Mammary epithelial cell (primary cell): ENCODE measurements at regions of chr12 and their contacts with region 1.

Region 1: GRCh38 chr12:32659908-32660440 is 19.1 kb upstream of the DNM1L start:
- DNase-seq: no peak
- H3K4me3 ChIP-seq: no peak overlapping the region
- H3K27ac ChIP-seq: no peak overlapping the region
- H3K4me1 ChIP-seq: no peaks in the 10 kb centered on the region
- H3K27me3 ChIP-seq: no peaks in the 10 kb centered on the region
- CTCF ChIP-seq: no peak

Region 2: DNA sequence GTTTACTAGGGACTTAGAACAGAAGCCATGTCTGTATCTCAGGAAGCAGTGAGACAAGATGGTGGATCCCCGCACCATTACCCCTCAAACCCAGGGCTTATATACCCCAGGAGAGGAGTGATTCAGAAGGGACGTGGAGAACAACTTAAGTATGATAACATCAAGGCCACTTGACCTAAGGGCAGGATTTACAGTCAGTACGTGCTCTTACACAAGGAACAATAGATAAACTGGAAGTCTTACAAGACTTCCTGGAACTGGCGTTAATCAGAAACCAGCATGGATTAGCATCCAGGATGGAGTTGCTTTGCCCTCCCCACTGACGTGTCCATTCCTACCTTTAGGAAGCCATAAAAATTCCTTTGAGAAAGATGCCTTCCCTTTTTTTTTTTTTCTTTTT is 1009.0 kb before region 1 on chr12:
- CTCF ChIA-PET with region 1: no interaction called
- dilution Hi-C with region 1: no loop called
- in situ Hi-C with region 1: loop called in 1 of 2 experiments (anchors 25 kb)
- intact Hi-C with region 1: loop called (anchors 5 kb)
- DNase-seq: no peak
- H3K4me3 ChIP-seq: no peak overlapping the region
- H3K27ac ChIP-seq: no peak overlapping the region
- H3K4me1 ChIP-seq: peaks cover 7% of the 10 kb centered on the region
- H3K27me3 ChIP-seq: no peaks in the 10 kb centered on the region
- CTCF ChIP-seq: no peak

Region 3: GRCh38 chr12:32377344-32378055 is 282.5 kb before region 1 on chr12:
- CTCF ChIA-PET with region 1: interaction called, 3 read pairs
- dilution Hi-C with region 1: no loop called
- in situ Hi-C with region 1: loop called (anchors 10 to 25 kb)
- intact Hi-C with region 1: no loop called
- DNase-seq: no peak
- H3K4me3 ChIP-seq: no peak overlapping the region
- H3K27ac ChIP-seq: no peak overlapping the region
- H3K4me1 ChIP-seq: no peaks in the 10 kb centered on the region
- H3K27me3 ChIP-seq: no peaks in the 10 kb centered on the region
- CTCF ChIP-seq: no peak

Region 4: GRCh38 chr12:33061844-33062243 is 401.9 kb after region 1 on chr12:
- CTCF ChIA-PET with region 1: no interaction called
- dilution Hi-C with region 1: no loop called
- in situ Hi-C with region 1: no loop called
- intact Hi-C with region 1: no loop called
- DNase-seq: no peak
- H3K4me3 ChIP-seq: no peak overlapping the region
- H3K27ac ChIP-seq: no peak overlapping the region
- H3K4me1 ChIP-seq: no peaks in the 10 kb centered on the region
- H3K27me3 ChIP-seq: no peaks in the 10 kb centered on the region
- CTCF ChIP-seq: no peak